Heart left ventricle (tissue), 16 donors: ENCODE measurements at regions of chr2 and their contacts with region 1.

Region 1: DNA sequence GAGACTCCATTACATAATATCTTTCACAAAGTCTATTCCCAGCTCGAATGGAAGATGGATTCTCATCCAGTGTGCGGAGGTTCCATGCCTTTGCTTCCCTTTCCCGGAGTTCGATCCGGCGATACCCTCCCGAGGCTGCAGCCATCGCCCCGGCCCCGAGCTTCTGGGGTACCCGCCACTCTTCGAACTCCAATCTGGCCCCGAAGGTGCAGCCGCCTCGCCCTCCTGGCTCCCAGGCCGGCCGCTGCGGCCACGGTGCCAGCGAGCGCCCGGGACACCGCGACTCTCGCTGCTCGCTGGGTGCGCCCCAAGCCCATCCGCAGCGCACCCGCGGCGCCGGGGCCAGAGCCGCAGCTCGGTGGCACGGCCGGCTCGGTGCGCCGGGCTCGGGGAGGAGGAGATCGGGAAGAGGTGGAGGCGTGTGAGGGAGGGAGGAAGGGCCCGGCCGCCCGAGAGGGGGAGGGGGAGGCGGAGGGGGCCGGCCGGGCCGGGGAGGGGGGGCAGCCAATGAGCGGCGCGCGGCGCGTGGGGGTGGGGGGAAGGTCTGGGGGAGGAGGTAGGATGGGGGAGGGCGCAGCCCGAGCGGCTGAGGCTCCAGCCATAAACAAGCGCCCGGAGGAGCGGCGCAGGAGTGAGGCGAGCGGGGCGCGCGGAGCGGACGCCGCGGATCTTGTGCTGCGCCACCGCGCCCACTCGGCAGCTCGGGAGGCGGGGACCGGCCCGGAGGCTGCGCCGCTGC is at the start of gene CRIM1:
- DNase-seq: peak; percentile 92 to 94 (median 94)
- ATAC-seq: peak; percentile 62 to 87 (median 78)
- H3K4me3 ChIP-seq: peak within 1 kb of the TSS; percentile 63 to 95 (median 85)
- H3K27ac ChIP-seq: peak within 1 kb of the TSS; percentile 80 to 97 (median 94)
- H3K4me1 ChIP-seq: peaks cover 0 to 52% (median 32%) of the 10 kb centered on the region in 12 donors
- H3K27me3 ChIP-seq: peaks cover 0 to 20% (median 0%) of the 10 kb centered on the region in 9 donors
- CTCF ChIP-seq: peak in 1 of 12 donors; percentile 19
- POLR2A ChIP-seq: peak in 1 of 2 donors; percentile 97
- total RNA-seq, gene CRIM1: 34.9 to 120 (median 89.3) TPM

Region 2: GRCh38 chr2:36413218-36413617 is 57.9 kb after region 1 on chr2:
- intact Hi-C with region 1: loop called in 9 of 10 experiments (anchors 5 kb)
- DNase-seq: no peak
- ATAC-seq: peak in 3 of 4 donors; percentile 18 to 52 (median 51)
- H3K4me3 ChIP-seq: no peak overlapping the region
- H3K27ac ChIP-seq: peak overlapping the region; percentile 22 to 63 (median 48)
- H3K4me1 ChIP-seq: peaks cover 15 to 100% (median 83%) of the 10 kb centered on the region in 12 donors
- H3K27me3 ChIP-seq: no peaks in the 10 kb centered on the region
- CTCF ChIP-seq: no peak
- POLR2A ChIP-seq: no peak

Region 3: DNA sequence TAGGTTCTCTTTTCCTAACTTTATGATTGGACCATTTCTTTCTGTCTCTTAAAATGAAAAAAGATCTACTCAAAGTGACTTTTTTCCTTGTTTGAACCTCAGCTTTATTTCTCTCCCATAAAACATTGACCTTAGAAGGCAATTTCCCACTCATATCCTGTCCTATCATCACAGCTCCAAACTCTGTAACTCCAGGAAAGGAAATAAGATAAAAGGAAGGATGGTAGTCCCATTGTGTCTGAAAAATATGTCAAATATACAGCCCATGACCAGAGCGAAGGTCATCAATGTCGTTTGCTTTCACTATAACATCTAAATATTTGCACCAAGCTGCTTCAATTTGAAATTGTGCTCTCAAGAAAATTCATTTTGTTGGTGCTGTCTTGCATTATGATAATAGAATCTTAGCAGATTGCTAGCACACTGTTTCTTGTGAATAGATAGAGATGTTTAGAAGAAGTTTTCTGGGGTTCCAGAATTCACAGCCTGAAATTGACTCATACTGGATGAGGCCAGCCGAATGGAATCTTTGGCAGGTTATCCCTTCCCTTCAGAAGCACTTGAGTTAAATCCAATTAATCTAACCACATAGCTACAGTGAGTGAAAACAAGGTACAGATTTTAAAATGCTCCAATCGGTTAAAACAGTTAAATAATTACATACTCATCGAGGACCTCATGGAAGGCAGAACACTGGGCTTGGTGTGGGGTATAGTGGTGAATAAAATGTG is 95.3 kb after region 1 on chr2:
- intact Hi-C with region 1: loop called in 5 of 10 experiments (anchors 5 kb)
- DNase-seq: no peak
- ATAC-seq: peak in 3 of 4 donors; percentile 50 to 77 (median 52)
- H3K4me3 ChIP-seq: no peak overlapping the region
- H3K27ac ChIP-seq: peak overlapping the region in 8 of 12 donors; percentile 9 to 76 (median 70)
- H3K4me1 ChIP-seq: peaks cover 12 to 86% (median 54%) of the 10 kb centered on the region in 12 donors
- H3K27me3 ChIP-seq: no peaks in the 10 kb centered on the region
- CTCF ChIP-seq: no peak
- POLR2A ChIP-seq: no peak

Region 4: DNA sequence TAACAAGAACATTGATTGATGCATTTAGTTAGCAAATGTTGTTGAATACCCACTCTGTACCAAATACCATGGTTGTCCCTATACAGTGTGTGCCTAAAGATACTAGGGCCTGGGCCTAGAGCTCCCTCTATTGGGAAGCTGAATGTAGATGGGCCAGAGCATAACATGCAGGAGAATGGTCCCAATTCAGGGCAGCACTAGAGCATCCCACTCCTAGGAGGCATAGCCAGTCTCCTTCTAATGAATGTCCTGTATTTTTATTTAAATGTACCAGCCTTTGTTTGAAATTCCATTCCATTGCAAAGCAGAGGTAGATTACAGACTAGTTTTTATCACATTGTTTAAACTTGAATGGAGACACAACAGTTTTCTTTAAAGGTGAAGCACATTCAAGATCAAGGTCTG is 152.1 kb after region 1 on chr2:
- intact Hi-C with region 1: loop called (anchors 1 to 5 kb)
- DNase-seq: peak in 4 of 5 donors; percentile 33 to 51 (median 42)
- ATAC-seq: peak; percentile 78 to 95 (median 92)
- H3K4me3 ChIP-seq: no peak overlapping the region
- H3K27ac ChIP-seq: no peak overlapping the region
- H3K4me1 ChIP-seq: no peaks in the 10 kb centered on the region
- H3K27me3 ChIP-seq: no peaks in the 10 kb centered on the region
- CTCF ChIP-seq: peak; percentile 65 to 88 (median 76)
- POLR2A ChIP-seq: no peak

Region 5: GRCh38 chr2:36597532-36598377 is 242.4 kb after region 1 on chr2 and contains the start of gene FEZ2:
- intact Hi-C with region 1: loop called in 1 of 10 experiments (anchors 2 kb)
- DNase-seq: peak; percentile 80 to 90 (median 84)
- ATAC-seq: peak; percentile 91 to 99 (median 98)
- H3K4me3 ChIP-seq: peak within 1 kb of the TSS; percentile 76 to 100 (median 99)
- H3K27ac ChIP-seq: peak within 1 kb of the TSS; percentile 85 to 100 (median 98)
- H3K4me1 ChIP-seq: peaks cover 0 to 29% (median 18%) of the 10 kb centered on the region in 12 donors
- H3K27me3 ChIP-seq: no peaks in the 10 kb centered on the region
- CTCF ChIP-seq: peak in 3 of 12 donors; percentile 12 to 18 (median 16)
- POLR2A ChIP-seq: peak in 1 of 2 donors; percentile 44
- total RNA-seq, gene FEZ2: 39.4 to 55.4 (median 50.2) TPM

Region 6: GRCh38 chr2:36785179-36785795 is 430.0 kb after region 1 on chr2:
- intact Hi-C with region 1: loop called in 5 of 10 experiments (anchors 5 to 10 kb)
- DNase-seq: peak in 4 of 5 donors; percentile 28 to 54 (median 38)
- ATAC-seq: peak; percentile 28 to 65 (median 60)
- H3K4me3 ChIP-seq: no peak overlapping the region
- H3K27ac ChIP-seq: no peak overlapping the region
- H3K4me1 ChIP-seq: peaks cover 0 to 19% (median 0%) of the 10 kb centered on the region in 12 donors
- H3K27me3 ChIP-seq: no peaks in the 10 kb centered on the region
- CTCF ChIP-seq: peak; percentile 83 to 97 (median 94)
- POLR2A ChIP-seq: no peak